B cell (primary cell): ENCODE measurements at regions of chr5 and their contacts with region 1.

Region 1: DNA sequence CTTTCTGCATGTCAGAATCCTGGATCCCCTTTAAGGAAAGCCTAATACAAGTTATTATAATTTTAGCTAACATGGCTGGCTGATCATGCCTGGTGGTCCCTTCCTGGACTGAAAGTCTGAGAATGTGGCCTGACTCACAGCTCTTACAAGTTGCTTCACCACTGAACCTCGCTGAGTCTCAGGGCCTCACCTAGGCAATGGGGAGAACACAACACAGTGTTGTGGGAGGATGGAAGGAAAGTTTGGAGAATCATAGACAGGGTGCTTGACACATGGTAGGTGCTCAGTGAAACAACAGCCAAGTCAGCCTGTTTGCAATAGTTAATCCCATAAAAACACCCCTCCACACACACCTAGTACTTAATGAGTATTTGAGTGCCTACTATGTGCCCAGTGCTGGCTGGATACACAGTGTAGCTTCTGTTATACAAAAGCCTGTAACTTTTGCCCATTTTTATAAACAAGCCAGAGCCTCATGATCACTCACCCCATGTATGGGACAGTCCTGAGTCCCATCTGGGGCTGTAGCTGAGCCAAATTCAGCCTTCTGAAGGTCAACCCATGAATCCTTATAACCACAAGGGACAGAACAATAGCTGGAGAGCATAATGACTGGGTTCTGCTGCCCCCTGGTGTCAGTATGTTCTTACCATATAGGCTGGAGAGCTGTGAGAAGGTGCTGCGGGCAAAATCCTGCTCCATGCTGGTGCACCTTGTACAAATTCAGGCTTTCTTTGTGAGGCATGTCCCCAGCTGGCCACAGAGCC is 3.9 kb downstream of the ACSL6 start:
- DNase-seq: peak; percentile 80
- ATAC-seq: peak; percentile 51
- H3K4me3 ChIP-seq: no peak overlapping the region
- H3K4me3 Mint-ChIP-seq: no peak overlapping the region
- H3K27ac ChIP-seq: no peak overlapping the region
- H3K27ac Mint-ChIP-seq: no peak overlapping the region
- H3K4me1 ChIP-seq: peaks cover 12% of the 10 kb centered on the region in 2 donors
- H3K4me1 Mint-ChIP-seq: peaks cover 14% of the 10 kb centered on the region
- H3K27me3 ChIP-seq: peaks cover 0 to 37% (median 16%) of the 10 kb centered on the region in 4 experiments
- H3K27me3 Mint-ChIP-seq: peaks cover 30% of the 10 kb centered on the region
- CTCF ChIP-seq: peak; percentile 79

Region 2: DNA sequence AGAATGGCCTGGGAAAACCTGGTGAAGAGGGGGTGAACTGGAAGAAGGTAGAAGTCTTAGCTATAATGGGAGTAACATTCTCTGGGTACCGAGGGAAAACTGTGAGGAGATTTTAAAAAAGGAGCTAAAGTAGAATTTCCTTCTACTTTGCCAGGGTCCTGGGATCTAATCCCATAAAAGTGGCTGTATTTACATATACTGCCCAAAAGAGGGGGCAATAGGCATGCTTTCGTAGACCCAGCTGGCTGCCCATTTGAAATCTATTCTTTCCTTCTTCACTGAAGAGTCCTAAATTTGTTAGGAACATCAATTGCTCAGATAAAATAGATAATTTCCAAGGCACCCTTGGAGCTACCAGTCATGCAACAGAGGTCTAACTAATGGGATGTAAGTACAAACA is 584.5 kb before region 1 on chr5:
- CTCF ChIA-PET with region 1: interaction called, 31 read pairs
- POLR2A ChIA-PET with region 1: no interaction called
- intact Hi-C with region 1: no loop called
- DNase-seq: no peak
- ATAC-seq: peak; percentile 21
- H3K4me3 ChIP-seq: no peak overlapping the region
- H3K4me3 Mint-ChIP-seq: no peak overlapping the region
- H3K27ac ChIP-seq: no peak overlapping the region
- H3K27ac Mint-ChIP-seq: no peak overlapping the region
- H3K4me1 ChIP-seq: no peaks in the 10 kb centered on the region
- H3K4me1 Mint-ChIP-seq: peaks cover 3% of the 10 kb centered on the region
- H3K27me3 ChIP-seq: no peaks in the 10 kb centered on the region
- H3K27me3 Mint-ChIP-seq: no peaks in the 10 kb centered on the region
- CTCF ChIP-seq: peak; percentile 47

Region 3: DNA sequence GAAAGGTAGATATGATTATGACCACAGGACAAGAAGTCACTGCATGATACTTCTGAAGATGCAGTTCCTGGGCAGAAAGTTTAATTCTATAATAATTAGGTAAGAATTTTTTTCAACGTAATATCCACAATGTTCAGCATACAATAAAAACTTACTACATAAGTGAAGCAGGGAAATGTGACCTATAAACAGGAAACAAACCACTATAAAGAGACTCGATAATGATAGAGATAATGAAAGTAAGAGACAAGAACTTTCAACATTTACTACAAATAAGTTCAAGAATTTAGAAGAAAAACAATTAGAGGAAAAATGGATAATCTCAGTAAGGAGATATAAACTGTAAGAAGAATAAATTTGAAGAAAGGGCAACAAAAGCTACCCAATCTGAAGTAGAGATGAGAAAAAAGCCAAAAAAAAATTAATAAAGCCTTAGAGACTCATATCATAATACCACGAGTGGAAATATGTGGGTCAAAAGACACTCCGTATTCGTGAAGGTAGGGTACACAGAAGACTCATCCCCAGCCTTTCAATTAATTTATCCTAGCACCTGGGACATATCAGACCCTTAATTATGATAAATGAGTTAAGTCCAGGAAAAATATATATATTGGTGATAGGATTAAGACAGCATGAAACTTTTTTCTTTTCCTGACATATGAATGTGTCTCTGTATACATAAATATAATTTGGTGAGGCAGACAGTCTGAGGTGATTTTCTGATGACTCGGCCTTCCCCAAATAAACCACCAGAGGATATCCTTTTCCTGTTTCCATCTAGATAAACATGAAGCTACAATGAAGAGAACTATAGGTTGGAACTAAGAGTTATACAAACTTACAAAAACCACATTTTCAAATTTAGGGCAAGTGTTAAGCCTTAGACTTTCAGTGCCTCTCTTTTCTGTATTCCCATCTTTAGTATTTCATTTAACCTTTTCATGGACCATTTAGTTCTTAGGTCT is 493.0 kb before region 1 on chr5:
- CTCF ChIA-PET with region 1: interaction called, 5 read pairs
- POLR2A ChIA-PET with region 1: no interaction called
- intact Hi-C with region 1: loop called (anchors 5 kb)
- DNase-seq: peak; percentile 52
- ATAC-seq: peak; percentile 41
- H3K4me3 ChIP-seq: peak overlapping the region in 1 of 5 experiments; percentile 44
- H3K4me3 Mint-ChIP-seq: peak overlapping the region; percentile 58
- H3K27ac ChIP-seq: peak overlapping the region in 1 of 2 donors; percentile 69
- H3K27ac Mint-ChIP-seq: peak overlapping the region; percentile 34
- H3K4me1 ChIP-seq: peaks cover 16 to 17% of the 10 kb centered on the region in 2 donors
- H3K4me1 Mint-ChIP-seq: peaks cover 24% of the 10 kb centered on the region
- H3K27me3 ChIP-seq: no peaks in the 10 kb centered on the region
- H3K27me3 Mint-ChIP-seq: no peaks in the 10 kb centered on the region
- CTCF ChIP-seq: peak; percentile 27

Region 4: GRCh38 chr5:131581702-131582101 is 425.9 kb before region 1 on chr5:
- CTCF ChIA-PET with region 1: interaction called, 405 read pairs
- POLR2A ChIA-PET with region 1: no interaction called
- intact Hi-C with region 1: no loop called
- DNase-seq: no peak
- ATAC-seq: no peak
- H3K4me3 ChIP-seq: no peak overlapping the region
- H3K4me3 Mint-ChIP-seq: no peak overlapping the region
- H3K27ac ChIP-seq: no peak overlapping the region
- H3K27ac Mint-ChIP-seq: no peak overlapping the region
- H3K4me1 ChIP-seq: no peaks in the 10 kb centered on the region
- H3K4me1 Mint-ChIP-seq: peaks cover 14% of the 10 kb centered on the region
- H3K27me3 ChIP-seq: no peaks in the 10 kb centered on the region
- H3K27me3 Mint-ChIP-seq: no peaks in the 10 kb centered on the region
- CTCF ChIP-seq: no peak

Region 5: GRCh38 chr5:131810510-131811249 is 196.9 kb before region 1 on chr5:
- CTCF ChIA-PET with region 1: interaction called, 11 read pairs
- POLR2A ChIA-PET with region 1: no interaction called
- intact Hi-C with region 1: loop called (anchors 1 kb)
- DNase-seq: no peak
- ATAC-seq: no peak
- H3K4me3 ChIP-seq: no peak overlapping the region
- H3K4me3 Mint-ChIP-seq: no peak overlapping the region
- H3K27ac ChIP-seq: no peak overlapping the region
- H3K27ac Mint-ChIP-seq: no peak overlapping the region
- H3K4me1 ChIP-seq: peaks cover 0 to 5% of the 10 kb centered on the region in 2 donors
- H3K4me1 Mint-ChIP-seq: peaks cover 6% of the 10 kb centered on the region
- H3K27me3 ChIP-seq: peaks cover 0 to 4% (median 0%) of the 10 kb centered on the region in 4 experiments
- H3K27me3 Mint-ChIP-seq: no peaks in the 10 kb centered on the region
- CTCF ChIP-seq: no peak

Region 6: DNA sequence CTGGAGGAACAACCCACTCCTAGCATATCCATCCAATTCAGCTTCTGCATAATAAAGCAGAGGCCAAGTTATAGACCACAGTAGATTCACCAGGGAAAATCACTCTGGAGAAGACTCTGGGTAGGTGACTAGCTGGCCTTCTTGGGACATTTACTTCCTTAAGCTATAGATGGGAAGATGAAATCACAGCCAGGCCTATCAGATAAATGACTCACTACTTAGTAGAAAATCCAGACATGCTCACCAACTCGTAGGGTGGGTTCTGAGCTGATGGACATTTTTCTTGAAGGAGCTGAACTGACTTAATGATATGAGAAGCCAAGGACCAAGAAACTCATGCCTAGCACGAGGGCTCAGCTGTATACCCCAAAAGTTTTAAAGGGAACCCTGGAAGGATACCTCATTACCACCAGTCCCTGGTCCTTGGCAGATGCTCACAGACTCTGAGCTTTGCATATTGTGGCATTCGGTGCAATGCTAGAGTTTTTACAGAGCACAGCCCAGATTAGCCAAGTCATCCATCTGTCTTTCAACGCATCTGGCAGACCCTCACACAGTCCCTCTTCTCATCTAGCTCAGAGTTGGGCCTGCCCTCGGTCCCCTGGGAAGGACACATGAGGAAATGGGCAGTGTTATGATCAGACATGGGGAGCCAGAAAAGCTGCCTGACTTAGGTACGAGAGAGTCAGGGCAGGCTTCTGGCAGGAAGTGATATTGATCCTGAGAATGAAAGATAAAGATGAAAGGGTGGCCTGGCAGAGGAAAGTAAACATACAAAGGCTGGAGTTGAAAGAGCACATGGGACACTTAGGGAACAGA is 11.2 kb before region 1 on chr5:
- CTCF ChIA-PET with region 1: interaction called, 12 read pairs
- POLR2A ChIA-PET with region 1: no interaction called
- intact Hi-C with region 1: no loop called
- DNase-seq: no peak
- ATAC-seq: no peak
- H3K4me3 ChIP-seq: no peak overlapping the region
- H3K4me3 Mint-ChIP-seq: no peak overlapping the region
- H3K27ac ChIP-seq: no peak overlapping the region
- H3K27ac Mint-ChIP-seq: no peak overlapping the region
- H3K4me1 ChIP-seq: no peaks in the 10 kb centered on the region
- H3K4me1 Mint-ChIP-seq: peaks cover 5% of the 10 kb centered on the region
- H3K27me3 ChIP-seq: no peaks in the 10 kb centered on the region
- H3K27me3 Mint-ChIP-seq: peaks cover 13% of the 10 kb centered on the region
- CTCF ChIP-seq: no peak

Region 7: DNA sequence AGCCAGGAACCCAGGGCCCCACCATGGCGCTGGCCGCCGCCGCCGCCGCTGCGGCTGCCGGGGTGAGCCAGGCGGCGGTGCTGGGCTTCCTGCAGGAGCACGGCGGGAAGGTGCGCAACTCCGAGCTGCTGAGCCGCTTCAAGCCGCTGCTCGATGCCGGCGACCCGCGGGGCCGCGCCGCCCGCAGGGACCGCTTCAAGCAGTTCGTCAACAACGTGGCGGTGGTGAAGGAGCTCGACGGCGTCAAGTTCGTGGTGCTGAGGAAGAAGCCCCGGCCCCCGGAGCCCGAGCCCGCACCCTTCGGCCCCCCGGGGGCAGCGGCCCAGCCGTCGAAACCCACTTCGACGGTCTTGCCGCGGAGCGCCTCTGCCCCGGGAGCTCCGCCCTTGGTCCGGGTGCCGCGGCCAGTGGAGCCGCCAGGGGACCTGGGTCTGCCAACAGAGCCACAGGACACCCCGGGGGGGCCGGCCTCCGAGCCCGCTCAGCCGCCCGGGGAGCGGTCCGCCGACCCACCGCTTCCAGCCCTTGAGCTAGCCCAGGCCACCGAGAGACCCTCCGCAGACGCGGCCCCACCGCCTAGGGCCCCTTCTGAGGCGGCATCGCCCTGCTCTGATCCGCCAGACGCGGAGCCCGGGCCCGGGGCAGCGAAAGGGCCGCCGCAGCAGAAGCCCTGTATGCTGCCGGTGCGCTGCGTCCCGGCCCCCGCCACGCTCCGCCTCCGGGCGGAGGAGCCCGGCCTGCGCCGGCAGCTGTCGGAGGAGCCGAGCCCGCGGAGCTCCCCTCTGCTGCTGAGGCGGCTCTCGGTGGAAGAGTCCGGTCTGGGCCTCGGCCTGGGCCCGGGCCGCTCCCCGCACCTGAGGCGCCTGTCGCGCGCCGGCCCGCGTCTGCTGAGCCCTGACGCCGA is 806.3 kb after region 1 on chr5:
- CTCF ChIA-PET with region 1: no interaction called
- POLR2A ChIA-PET with region 1: no interaction called
- intact Hi-C with region 1: no loop called
- DNase-seq: peak; percentile 70
- ATAC-seq: peak; percentile 48
- H3K4me3 ChIP-seq: peak overlapping the region in 3 of 5 experiments; percentile 30 to 50 (median 38)
- H3K4me3 Mint-ChIP-seq: no peak overlapping the region
- H3K27ac ChIP-seq: no peak overlapping the region
- H3K27ac Mint-ChIP-seq: no peak overlapping the region
- H3K4me1 ChIP-seq: peaks cover 10 to 16% of the 10 kb centered on the region in 2 donors
- H3K4me1 Mint-ChIP-seq: peaks cover 11% of the 10 kb centered on the region
- H3K27me3 ChIP-seq: peaks cover 0 to 47% (median 26%) of the 10 kb centered on the region in 4 experiments
- H3K27me3 Mint-ChIP-seq: peaks cover 36% of the 10 kb centered on the region
- CTCF ChIP-seq: no peak